Activated T-helper 1 cell treated with anti-CD3 and anti-CD28 coated beads, Interleukin-12 subunit alpha, Interleukin-12 subunit beta, Interleukin-2, Interleukin-4 antibody, amounts not matched to agents 30 ng/mL and 10 ng/mL and 1 ng/mL, durations not matched to agents 14 hours and 24 hours and 36 hours (primary cell): ENCODE measurements at regions of chr9 and their contacts with region 1.

Region 1: DNA sequence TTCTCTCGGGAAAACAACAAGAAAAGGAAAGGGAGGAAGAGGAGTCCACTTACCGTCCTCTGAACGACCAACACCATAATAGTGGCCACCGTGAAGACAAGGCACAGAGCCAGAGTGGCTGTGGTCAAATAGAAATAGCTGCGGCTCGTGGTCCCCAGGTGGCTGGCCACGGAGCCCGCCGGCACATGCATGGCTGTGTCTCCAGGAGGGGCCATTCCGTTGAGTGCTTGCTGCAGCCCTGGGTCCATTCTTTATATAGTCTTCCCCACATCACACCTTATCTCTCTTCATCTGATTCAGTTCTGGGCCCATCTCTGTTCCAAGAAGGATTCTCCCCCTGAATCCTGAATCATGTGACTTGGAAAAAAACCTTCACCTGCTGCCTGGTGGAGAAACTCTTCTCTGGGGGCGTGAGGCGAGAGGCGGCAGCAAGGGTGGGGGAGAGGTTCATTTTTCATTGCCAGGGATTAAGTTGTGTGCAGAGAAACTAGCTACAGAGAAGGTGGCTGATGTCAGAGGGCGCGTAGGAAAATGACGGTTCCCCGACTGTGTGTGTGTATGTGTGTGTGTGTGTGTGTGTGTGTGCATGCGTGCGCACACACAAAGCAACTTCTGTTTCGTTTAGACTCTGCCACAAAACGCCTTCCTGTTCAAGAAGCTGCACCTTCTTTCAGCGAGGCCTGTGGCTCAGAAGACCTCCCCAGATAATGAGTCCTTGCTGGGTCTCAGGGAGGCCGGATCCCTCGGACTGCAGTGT is at the start of gene TNFSF8:
- DNase-seq: peak; percentile 73
- H3K4me3 Mint-ChIP-seq: peak within 1 kb of the TSS; percentile 98
- H3K27ac Mint-ChIP-seq: peak within 1 kb of the TSS; percentile 99
- H3K4me1 Mint-ChIP-seq: peaks cover 62% of the 10 kb centered on the region
- H3K27me3 Mint-ChIP-seq: no peaks in the 10 kb centered on the region
- total RNA-seq, gene TNFSF8: 200 and 207 TPM in 2 replicates

Region 2: DNA sequence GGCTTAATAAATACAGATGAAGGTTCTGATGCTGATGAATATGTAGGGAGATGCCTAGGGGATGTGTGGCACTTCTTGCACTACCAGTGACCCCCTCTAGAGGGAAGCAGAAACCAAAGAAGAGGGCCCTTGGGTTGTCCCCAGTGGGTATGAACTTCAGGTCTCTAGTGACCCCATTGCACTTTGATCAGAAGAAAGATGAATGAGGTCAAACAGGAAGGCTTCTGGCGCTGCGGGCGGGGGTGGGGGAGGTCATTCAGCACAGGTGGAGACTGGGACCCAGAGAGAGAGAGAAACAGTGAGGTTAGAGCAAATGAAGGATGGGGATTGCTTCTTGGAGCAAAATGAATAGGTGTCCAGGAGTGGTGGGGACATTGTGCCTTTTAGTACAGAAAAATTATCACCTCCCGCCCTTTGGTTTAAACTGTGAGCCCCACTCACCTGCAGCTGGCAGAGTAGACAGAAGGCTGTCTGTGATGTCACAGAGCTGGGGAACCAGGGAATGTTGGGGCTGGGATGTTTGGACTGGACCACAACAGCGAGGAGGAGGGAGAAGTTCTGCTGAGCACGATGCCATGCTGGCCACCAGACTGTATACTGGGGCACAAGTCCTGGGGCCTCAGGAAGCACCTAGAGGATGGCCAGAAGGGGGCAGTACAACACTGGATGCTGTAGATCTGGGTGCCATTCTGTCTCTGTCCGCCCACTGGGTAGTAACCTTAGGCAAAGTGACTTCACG is 248.5 kb before region 1 on chr9 and contains the start of gene TEX48:
- intact Hi-C with region 1: loop called (anchors 1 kb)
- DNase-seq: peak; percentile 76
- H3K4me3 Mint-ChIP-seq: peak within 1 kb of the TSS; percentile 49
- H3K27ac Mint-ChIP-seq: peak within 1 kb of the TSS; percentile 97
- H3K4me1 Mint-ChIP-seq: peaks cover 81% of the 10 kb centered on the region
- H3K27me3 Mint-ChIP-seq: no peaks in the 10 kb centered on the region
- total RNA-seq, gene TEX48: 1.0 and 1.2 TPM in 2 replicates

Region 3: DNA sequence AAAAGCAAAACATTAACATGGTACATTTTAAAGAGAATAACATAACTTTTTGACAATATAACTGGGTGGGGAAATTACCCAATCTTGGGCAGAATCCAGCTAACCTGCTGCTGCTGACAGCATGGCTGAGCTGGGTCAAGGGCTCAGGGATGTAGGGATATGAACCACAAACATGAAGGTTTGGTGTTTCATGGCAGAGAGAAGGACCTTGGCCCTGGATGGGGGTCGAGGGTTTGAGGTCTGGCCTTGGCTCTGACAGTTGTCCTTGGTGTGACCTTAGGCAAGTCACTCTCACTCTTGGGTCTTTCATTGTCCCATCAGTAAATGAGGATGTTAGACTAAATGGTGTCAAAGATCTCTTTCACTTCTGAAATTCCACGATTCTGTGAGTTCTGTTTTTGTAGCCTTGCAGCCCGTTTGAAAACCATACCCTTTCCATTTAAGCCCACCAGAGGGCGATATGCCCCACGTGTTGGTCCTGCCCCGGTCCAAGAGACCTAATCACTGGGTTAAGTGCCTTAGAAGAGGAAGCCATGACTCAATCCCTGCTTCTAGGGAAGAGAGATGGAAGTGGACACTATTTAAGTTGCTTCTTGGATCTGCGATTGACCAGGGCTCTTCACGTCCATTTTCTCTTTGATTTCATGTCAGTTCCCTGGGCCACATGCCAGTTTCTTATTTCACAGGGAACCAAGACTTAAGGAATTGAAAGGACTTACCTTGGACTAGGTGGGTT is 191.5 kb before region 1 on chr9:
- intact Hi-C with region 1: loop called (anchors 1 kb)
- DNase-seq: peak; percentile 70
- H3K4me3 Mint-ChIP-seq: no peak overlapping the region
- H3K27ac Mint-ChIP-seq: peak overlapping the region; percentile 81
- H3K4me1 Mint-ChIP-seq: peaks cover 73% of the 10 kb centered on the region
- H3K27me3 Mint-ChIP-seq: no peaks in the 10 kb centered on the region

Region 4: DNA sequence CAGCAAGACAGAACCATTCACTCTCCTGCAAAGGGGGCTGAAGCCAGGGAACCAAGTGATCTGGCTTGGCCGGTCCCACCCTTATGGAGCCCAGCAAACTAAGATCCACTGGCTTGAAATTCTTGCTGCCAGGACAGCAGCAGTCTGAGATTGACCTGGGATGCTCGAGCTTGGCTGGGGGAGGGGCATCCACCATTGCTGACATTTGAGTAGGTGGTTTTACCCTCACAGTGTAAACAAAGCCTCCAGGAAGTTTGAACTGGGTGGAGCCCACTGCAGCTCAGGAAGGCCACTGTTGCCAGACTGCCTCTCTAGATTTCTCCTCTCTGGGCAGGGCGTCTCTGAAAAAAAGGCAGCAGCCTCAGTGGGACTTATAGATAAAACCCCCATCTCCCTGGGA is 60.4 kb before region 1 on chr9:
- intact Hi-C with region 1: no loop called
- DNase-seq: peak; percentile 19
- H3K4me3 Mint-ChIP-seq: no peak overlapping the region
- H3K27ac Mint-ChIP-seq: peak overlapping the region; percentile 48
- H3K4me1 Mint-ChIP-seq: peaks cover 28% of the 10 kb centered on the region
- H3K27me3 Mint-ChIP-seq: no peaks in the 10 kb centered on the region

Region 5: DNA sequence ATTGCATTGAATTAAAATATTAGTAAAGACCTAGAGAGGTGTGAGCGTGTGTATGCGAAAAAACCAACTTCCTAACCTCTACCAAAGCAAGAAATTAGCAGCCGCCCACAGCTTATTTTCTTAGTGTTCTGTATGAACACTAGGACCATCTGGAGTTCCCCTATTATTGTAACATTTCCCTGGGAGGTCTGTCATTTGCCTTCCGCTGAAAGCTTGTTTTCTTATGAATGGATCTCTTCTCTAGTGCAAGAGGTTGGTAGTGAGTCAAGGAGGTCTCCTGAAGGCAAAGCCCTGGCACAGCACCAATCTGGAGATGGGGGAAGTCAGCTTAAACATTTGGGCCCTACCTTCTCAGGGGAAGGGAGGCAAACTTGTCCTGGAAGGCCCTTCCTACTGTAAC is 10.6 kb before region 1 on chr9:
- intact Hi-C with region 1: loop called (anchors 1 kb)
- DNase-seq: no peak
- H3K4me3 Mint-ChIP-seq: peak overlapping the region; percentile 63
- H3K27ac Mint-ChIP-seq: peak overlapping the region; percentile 64
- H3K4me1 Mint-ChIP-seq: peaks cover 94% of the 10 kb centered on the region
- H3K27me3 Mint-ChIP-seq: no peaks in the 10 kb centered on the region

Region 6: GRCh38 chr9:115013998-115014397 is 83.8 kb after region 1 on chr9:
- intact Hi-C with region 1: loop called (anchors 1 kb)
- DNase-seq: peak; percentile 73
- H3K4me3 Mint-ChIP-seq: no peak overlapping the region
- H3K27ac Mint-ChIP-seq: peak overlapping the region; percentile 52
- H3K4me1 Mint-ChIP-seq: peaks cover 72% of the 10 kb centered on the region
- H3K27me3 Mint-ChIP-seq: peaks cover 3% of the 10 kb centered on the region